ENCODE measurements at regions of chr12 and their contacts with region 1.

Region 1: GRCh38 chr12:53115112-53115890 is 12.0 kb downstream of the SOAT2 start:
- DNase-seq: no peak
- ATAC-seq: peak in 4 of 8 donors; percentile 7 to 56 (median 15)
- H3K4me3 ChIP-seq: no peak overlapping the region
- H3K27ac ChIP-seq: peak overlapping the region in 8 of 10 donors; percentile 43 to 89 (median 81)
- H3K4me1 ChIP-seq: peaks cover 0 to 14% (median 3%) of the 10 kb centered on the region in 9 donors
- H3K27me3 ChIP-seq: no peaks in the 10 kb centered on the region
- CTCF ChIP-seq: no peak

Region 2: GRCh38 chr12:52951640-52952431 is 163.5 kb before region 1 on chr12:
- intact Hi-C with region 1: no loop called
- DNase-seq: peak in 1 of 2 donors; percentile 33
- ATAC-seq: no peak
- H3K4me3 ChIP-seq: no peak overlapping the region
- H3K27ac ChIP-seq: no peak overlapping the region
- H3K4me1 ChIP-seq: peaks cover 0 to 12% (median 0%) of the 10 kb centered on the region in 9 donors
- H3K27me3 ChIP-seq: peaks cover 0 to 21% (median 14%) of the 10 kb centered on the region in 7 donors
- CTCF ChIP-seq: peak in 4 of 9 donors; percentile 13 to 34 (median 20)

Region 3: GRCh38 chr12:53025250-53025649 is 90.1 kb before region 1 on chr12:
- intact Hi-C with region 1: no loop called
- DNase-seq: no peak
- ATAC-seq: no peak
- H3K4me3 ChIP-seq: no peak overlapping the region
- H3K27ac ChIP-seq: no peak overlapping the region
- H3K4me1 ChIP-seq: no peaks in the 10 kb centered on the region
- H3K27me3 ChIP-seq: no peaks in the 10 kb centered on the region
- CTCF ChIP-seq: no peak

Region 4: GRCh38 chr12:53151039-53151438 is 35.7 kb after region 1 on chr12:
- intact Hi-C with region 1: loop called in 1 of 10 experiments (anchors 5 kb)
- DNase-seq: no peak
- ATAC-seq: no peak
- H3K4me3 ChIP-seq: no peak overlapping the region
- H3K27ac ChIP-seq: no peak overlapping the region
- H3K4me1 ChIP-seq: peaks cover 0 to 5% (median 0%) of the 10 kb centered on the region in 9 donors
- H3K27me3 ChIP-seq: no peaks in the 10 kb centered on the region
- CTCF ChIP-seq: no peak

Region 5: GRCh38 chr12:53174881-53175491 is 59.7 kb after region 1 on chr12:
- intact Hi-C with region 1: loop called in 1 of 10 experiments (anchors 10 kb)
- DNase-seq: no peak
- ATAC-seq: peak in 2 of 8 donors; percentile 30 to 33
- H3K4me3 ChIP-seq: no peak overlapping the region
- H3K27ac ChIP-seq: peak overlapping the region in 1 of 10 donors; percentile 54
- H3K4me1 ChIP-seq: peaks cover 0 to 21% (median 13%) of the 10 kb centered on the region in 9 donors
- H3K27me3 ChIP-seq: no peaks in the 10 kb centered on the region
- CTCF ChIP-seq: peak in 3 of 9 donors; percentile 16 to 30 (median 28)

Measured in heart right ventricle (tissue), 16 donors.